CD4-positive, alpha-beta memory T cell (primary cell): ENCODE measurements at regions of chr1 and their contacts with region 1.

Region 1: DNA sequence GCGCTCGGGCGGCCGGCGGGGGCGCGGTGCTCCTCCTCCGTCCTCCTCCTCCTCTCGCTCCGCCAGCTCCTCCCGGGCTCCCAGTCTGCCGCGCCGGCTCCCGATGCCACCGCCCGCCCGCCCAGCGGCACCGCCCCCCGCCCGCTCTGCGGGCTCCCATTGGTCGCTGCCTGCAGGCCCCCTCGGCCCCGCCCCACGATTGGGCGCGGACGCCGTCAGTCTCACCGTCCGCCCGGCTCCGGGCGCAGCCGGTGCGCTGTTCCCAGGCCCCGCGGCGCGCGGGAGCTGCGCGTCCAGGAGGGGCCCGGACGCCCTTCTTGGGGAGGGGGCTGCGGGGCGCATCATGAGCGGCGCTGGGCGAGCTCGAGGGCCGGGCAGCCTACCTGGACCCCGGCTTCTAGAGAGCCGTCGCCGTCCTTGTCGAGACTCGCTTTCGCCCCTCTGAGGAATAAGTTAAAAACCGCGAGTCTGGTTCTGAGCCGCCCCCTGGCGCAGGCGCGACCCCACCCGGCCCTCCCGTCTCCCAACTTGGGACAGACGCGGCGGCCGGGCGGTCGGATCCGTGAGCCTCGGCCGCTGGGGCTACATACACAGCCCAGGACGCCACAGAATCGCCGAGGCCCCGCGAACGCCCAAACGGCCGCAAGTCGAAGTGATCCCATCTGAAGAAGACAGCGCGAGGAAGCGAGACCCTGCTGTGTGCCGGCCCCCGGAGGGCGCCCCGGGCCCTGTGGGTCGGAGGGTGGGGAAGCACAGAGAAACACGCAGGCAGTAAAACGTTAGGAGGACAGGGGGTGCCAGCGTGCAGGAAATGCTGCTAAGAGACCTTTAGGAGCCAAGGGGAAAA is at the start of gene SIPA1L2:
- DNase-seq: peak; percentile 77 to 90 (median 84)
- H3K4me3 ChIP-seq: peak within 1 kb of the TSS in 1 of 2 donors; percentile 46
- H3K4me3 Mint-ChIP-seq: peak within 1 kb of the TSS; percentile 88 to 95 (median 90)
- H3K27ac ChIP-seq: peak within 1 kb of the TSS; percentile 11
- H3K27ac Mint-ChIP-seq: peak within 1 kb of the TSS in 5 of 7 donors; percentile 33 to 77 (median 66)
- H3K4me1 ChIP-seq: peaks cover 28% of the 10 kb centered on the region
- H3K4me1 Mint-ChIP-seq: peaks cover 17 to 39% (median 23%) of the 10 kb centered on the region in 4 donors
- H3K27me3 ChIP-seq: no peaks in the 10 kb centered on the region
- H3K27me3 Mint-ChIP-seq: peaks cover 14 to 16% of the 10 kb centered on the region in 2 donors
- total RNA-seq, gene SIPA1L2: 0.94 to 1.6 TPM

Region 2: DNA sequence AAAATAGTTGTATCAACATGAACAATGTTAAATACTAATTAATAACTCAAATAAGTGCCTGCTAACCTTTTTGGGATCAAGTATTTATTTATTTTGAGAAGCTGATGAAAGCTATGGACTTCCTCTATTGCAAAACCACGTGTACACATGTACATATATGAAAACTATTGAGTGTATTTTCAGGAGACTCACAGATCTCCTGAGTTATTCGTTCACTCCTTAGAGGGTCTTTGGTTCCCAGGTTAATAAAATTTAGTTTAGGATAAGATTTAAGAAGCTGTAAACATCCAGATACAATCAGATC is 873.2 kb before region 1 on chr1:
- CTCF ChIA-PET with region 1: interaction called, 16 read pairs
- POLR2A ChIA-PET with region 1: no interaction called
- intact Hi-C with region 1: loop called (anchors 2 kb)
- DNase-seq: no peak
- H3K4me3 ChIP-seq: no peak overlapping the region
- H3K4me3 Mint-ChIP-seq: no peak overlapping the region
- H3K27ac ChIP-seq: no peak overlapping the region
- H3K27ac Mint-ChIP-seq: no peak overlapping the region
- H3K4me1 ChIP-seq: no peaks in the 10 kb centered on the region
- H3K4me1 Mint-ChIP-seq: peaks cover 0 to 4% (median 0%) of the 10 kb centered on the region in 4 donors
- H3K27me3 ChIP-seq: no peaks in the 10 kb centered on the region
- H3K27me3 Mint-ChIP-seq: no peaks in the 10 kb centered on the region

Region 3: GRCh38 chr1:232047474-232047873 is 582.8 kb before region 1 on chr1:
- CTCF ChIA-PET with region 1: no interaction called
- POLR2A ChIA-PET with region 1: no interaction called
- intact Hi-C with region 1: loop called (anchors 10 kb)
- DNase-seq: no peak
- H3K4me3 ChIP-seq: no peak overlapping the region
- H3K4me3 Mint-ChIP-seq: no peak overlapping the region
- H3K27ac ChIP-seq: no peak overlapping the region
- H3K27ac Mint-ChIP-seq: no peak overlapping the region
- H3K4me1 ChIP-seq: no peaks in the 10 kb centered on the region
- H3K4me1 Mint-ChIP-seq: no peaks in the 10 kb centered on the region
- H3K27me3 ChIP-seq: no peaks in the 10 kb centered on the region
- H3K27me3 Mint-ChIP-seq: peaks cover 0 to 2% of the 10 kb centered on the region in 2 donors

Region 4: DNA sequence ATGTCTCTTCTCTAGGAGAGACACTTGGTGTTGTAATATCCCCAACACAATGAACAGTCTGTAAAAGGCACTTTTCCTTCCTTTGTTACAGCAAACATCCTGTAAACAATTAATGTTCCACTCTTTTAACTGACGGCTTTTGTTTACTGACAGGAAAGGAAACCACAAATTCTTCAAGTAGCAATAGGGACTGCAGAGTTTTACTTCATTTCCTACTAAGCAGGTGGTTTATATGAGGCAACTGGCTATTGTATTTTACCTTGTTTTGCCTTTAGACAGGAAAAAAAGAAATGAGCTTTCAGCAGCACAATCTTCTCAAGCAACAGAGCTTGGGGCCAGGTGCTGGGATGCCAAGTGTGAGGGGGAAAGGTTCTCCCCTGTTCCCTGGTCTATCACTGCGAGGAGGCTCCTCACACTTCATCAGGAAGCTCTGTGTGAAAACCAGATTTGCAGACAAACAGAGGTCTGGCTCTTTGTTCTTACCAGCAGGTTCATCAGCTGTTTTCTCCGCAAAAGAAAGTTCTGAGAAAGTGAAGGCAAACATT is 51.5 kb before region 1 on chr1:
- CTCF ChIA-PET with region 1: interaction called, 11 read pairs
- POLR2A ChIA-PET with region 1: interaction called, 11 read pairs
- intact Hi-C with region 1: loop called (anchors 1 kb)
- DNase-seq: peak in 4 of 5 donors; percentile 30 to 55 (median 44)
- H3K4me3 ChIP-seq: no peak overlapping the region
- H3K4me3 Mint-ChIP-seq: peak overlapping the region; percentile 65 to 84 (median 73)
- H3K27ac ChIP-seq: peak overlapping the region; percentile 13
- H3K27ac Mint-ChIP-seq: peak overlapping the region; percentile 39 to 93 (median 88)
- H3K4me1 ChIP-seq: peaks cover 37% of the 10 kb centered on the region
- H3K4me1 Mint-ChIP-seq: peaks cover 41 to 66% (median 48%) of the 10 kb centered on the region in 4 donors
- H3K27me3 ChIP-seq: no peaks in the 10 kb centered on the region
- H3K27me3 Mint-ChIP-seq: no peaks in the 10 kb centered on the region

Region 5: DNA sequence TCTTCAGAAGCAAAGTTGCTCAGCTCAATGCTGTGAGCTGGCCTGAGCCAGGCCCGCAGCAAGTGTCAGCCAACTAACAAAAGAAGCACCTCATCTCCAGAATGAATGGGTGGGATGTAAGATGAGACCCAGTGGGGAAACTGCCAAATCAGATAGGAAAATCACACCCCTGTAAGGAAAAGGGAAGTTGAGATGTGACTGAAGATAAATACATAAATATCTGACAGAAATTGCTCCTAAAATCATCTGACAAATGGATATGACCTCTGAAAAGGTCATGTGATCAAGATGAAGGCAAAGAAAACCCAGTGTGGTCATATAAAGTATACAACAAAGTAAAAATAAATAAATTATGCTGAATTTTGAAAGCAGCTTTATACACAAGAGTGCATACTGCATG is 13.1 kb before region 1 on chr1:
- CTCF ChIA-PET with region 1: interaction called, 13 read pairs
- POLR2A ChIA-PET with region 1: interaction called, 4 read pairs
- intact Hi-C with region 1: no loop called
- DNase-seq: no peak
- H3K4me3 ChIP-seq: no peak overlapping the region
- H3K4me3 Mint-ChIP-seq: no peak overlapping the region
- H3K27ac ChIP-seq: no peak overlapping the region
- H3K27ac Mint-ChIP-seq: no peak overlapping the region
- H3K4me1 ChIP-seq: no peaks in the 10 kb centered on the region
- H3K4me1 Mint-ChIP-seq: peaks cover 10 to 26% (median 16%) of the 10 kb centered on the region in 4 donors
- H3K27me3 ChIP-seq: no peaks in the 10 kb centered on the region
- H3K27me3 Mint-ChIP-seq: no peaks in the 10 kb centered on the region